Cardiac septum (tissue), 1 donor: ENCODE measurements at regions of chr14 and their contacts with region 1.

Region 1: GRCh38 chr14:55117803-55118441 is 11.1 kb upstream of the LGALS3 start:
- DNase-seq: no peak

Region 2: GRCh38 chr14:55102141-55102621 is 15.7 kb before region 1 on chr14:
- intact Hi-C with region 1: loop called (anchors 2 kb)
- DNase-seq: no peak